IMR-90 (cell line): ENCODE measurements at regions of chr1 and their contacts with region 1.

Region 1: GRCh38 chr1:156456622-156457465 is 43.7 kb downstream of the MEF2D start:
- DNase-seq: peak; percentile 97
- ATAC-seq: peak; percentile 88
- H3K4me3 ChIP-seq: peak overlapping the region; percentile 43
- H3K27ac ChIP-seq: peak overlapping the region; percentile 87
- H3K4me1 ChIP-seq: peaks cover 4% of the 10 kb centered on the region; the same call in 1 of the 2 replicates
- H3K27me3 ChIP-seq: peaks cover 2% of the 10 kb centered on the region
- CTCF ChIP-seq: no peak
- POLR2A ChIP-seq: peak; percentile 63; the same call in 1 of the 2 replicates
- RAD21 ChIP-seq: no peak

Region 2: DNA sequence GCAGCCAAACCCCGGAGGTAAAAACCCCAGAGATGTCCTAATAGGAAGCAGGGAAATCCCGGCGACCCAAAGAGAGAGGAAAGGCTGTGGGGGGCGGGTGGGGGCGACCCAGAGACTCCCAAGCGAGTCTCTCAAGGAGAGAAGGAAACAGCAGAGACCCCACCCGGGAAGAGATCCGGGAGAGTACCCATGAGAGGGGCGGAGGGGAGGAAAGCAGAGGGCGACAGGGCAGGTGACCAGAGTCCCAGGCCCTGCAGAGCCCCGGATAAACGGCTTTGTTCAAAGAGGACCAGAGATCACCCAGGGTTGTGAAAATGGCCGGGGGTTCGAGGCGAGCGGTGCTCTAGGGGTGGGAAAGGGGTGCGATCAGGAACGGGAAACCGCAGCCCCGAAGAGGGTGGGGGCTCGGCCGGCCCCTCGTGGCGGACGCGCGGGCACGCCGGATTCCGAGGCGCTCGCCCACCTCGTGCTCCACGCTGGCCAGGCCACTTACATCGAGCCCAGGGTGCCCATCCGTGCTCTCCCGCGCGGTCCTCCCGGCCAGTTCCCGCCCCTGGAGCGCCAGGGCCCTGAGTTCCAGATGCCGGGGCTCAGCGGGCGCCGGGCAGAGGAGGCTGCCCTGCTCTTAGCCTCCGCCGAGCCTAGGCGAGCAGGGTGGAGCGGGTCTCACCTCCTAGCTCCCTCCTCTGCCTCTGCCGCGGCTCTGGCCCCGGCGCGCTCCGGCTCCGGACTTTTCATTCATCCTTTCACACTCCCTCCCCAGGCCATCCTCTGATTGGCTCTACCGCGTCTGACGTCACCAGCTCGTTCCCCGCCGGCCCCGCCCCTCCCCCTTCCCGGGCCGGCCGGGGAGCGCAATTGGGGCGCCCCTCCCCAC is 35.5 kb before region 1 on chr1:
- CTCF ChIA-PET with region 1: no interaction called
- POLR2A ChIA-PET with region 1: no interaction called
- dilution Hi-C with region 1: no loop called
- in situ Hi-C with region 1: no loop called
- intact Hi-C with region 1: no loop called
- DNase-seq: peak; percentile 45
- ATAC-seq: peak; percentile 88
- H3K4me3 ChIP-seq: no peak overlapping the region
- H3K27ac ChIP-seq: no peak overlapping the region
- H3K4me1 ChIP-seq: peaks cover 1% of the 10 kb centered on the region; the same call in 1 of the 2 replicates
- H3K27me3 ChIP-seq: peaks cover 92% of the 10 kb centered on the region
- CTCF ChIP-seq: no peak
- POLR2A ChIP-seq: no peak
- RAD21 ChIP-seq: no peak

Region 3: DNA sequence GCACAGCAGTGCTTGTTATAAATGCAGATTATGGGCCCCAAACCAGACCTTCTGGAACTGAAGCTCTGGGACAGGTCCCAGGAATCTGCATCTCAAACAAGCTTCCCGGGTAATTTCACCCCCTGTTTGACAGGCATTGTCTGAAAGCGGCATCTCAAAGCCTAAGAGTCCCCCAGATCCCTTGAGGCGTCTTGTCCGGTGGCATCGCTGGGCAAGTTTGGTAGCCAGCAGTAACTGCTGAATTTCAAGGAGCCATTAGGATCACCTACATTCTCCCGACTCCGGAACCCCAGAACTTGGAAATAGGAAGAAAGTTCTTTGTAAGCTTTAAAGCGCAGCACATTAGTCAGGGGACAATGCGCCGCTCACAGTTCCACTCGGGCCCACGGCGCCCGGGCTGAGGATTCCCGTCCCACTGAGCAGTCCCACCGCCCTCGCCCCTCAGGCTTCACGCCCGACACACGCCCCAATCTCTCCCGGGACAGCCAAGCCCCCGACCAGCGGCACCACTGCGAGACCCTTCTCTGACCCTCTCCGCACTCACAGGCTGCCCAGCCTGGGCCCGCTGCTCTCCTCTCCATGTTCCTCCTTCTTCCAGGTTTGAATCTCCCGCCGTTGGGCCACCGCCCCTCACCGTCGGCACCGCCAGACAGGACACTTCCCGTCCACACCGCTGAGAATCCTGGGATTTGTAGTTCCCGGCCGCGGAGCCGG is 115.3 kb after region 1 on chr1 and contains the start of gene IQGAP3:
- CTCF ChIA-PET with region 1: no interaction called
- POLR2A ChIA-PET with region 1: no interaction called
- dilution Hi-C with region 1: no loop called
- in situ Hi-C with region 1: no loop called
- intact Hi-C with region 1: loop called (anchors 1 kb)
- DNase-seq: peak; percentile 69
- ATAC-seq: peak; percentile 75
- H3K4me3 ChIP-seq: peak within 1 kb of the TSS; percentile 73
- H3K27ac ChIP-seq: peak within 1 kb of the TSS; percentile 66
- H3K4me1 ChIP-seq: peaks cover 7% of the 10 kb centered on the region
- H3K27me3 ChIP-seq: peaks cover 15% of the 10 kb centered on the region
- CTCF ChIP-seq: no peak
- POLR2A ChIP-seq: no peak; the same call in 1 of the 2 replicates
- RAD21 ChIP-seq: no peak
- total RNA-seq, gene IQGAP3: 13.6 TPM in 2 replicates

Region 4: DNA sequence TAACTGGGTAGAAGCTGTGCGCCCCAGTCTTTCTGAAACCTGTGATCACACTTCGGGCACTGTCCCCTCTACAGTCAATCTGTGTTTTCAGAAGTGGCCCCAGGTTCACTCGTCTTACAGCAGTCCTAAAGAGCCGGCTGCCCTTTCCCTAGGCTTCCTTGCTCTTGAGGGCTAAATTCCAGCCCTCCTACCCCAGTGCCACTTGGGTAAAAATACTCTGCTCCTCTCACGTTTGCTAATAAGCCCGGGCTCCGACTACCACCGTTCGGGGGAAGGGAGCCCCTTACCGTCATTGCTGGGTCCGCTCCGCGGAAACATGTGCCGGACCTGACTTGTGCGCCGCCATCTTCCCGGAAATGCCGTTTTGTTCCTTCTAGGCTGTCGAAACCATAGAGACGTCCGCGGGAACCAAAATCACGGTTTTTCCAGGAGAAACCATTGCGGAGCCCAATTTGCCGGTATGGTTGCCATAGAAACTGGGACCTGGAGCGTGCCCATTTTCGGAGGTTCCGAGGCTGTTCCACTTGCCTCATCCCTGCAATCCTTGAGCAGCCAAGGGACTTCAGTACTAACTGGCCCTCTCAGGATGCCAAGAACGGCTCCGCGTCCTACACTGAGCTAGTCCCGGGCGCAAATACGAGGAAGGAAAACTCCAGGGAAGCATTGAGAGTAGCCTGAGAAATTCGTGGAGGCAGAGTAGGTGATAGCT is 144.4 kb after region 1 on chr1 and contains the start of gene GPATCH4:
- CTCF ChIA-PET with region 1: no interaction called
- POLR2A ChIA-PET with region 1: no interaction called
- dilution Hi-C with region 1: no loop called
- in situ Hi-C with region 1: no loop called
- intact Hi-C with region 1: loop called (anchors 2 kb)
- DNase-seq: peak; percentile 92
- ATAC-seq: peak; percentile 95
- H3K4me3 ChIP-seq: peak within 1 kb of the TSS; percentile 78
- H3K27ac ChIP-seq: peak within 1 kb of the TSS; percentile 54
- H3K4me1 ChIP-seq: 0 out of 2 replicates have a peak, but pooled peaks cover 4% of the 10 kb centered on the region
- H3K27me3 ChIP-seq: no peaks in the 10 kb centered on the region
- CTCF ChIP-seq: no peak
- POLR2A ChIP-seq: peak; percentile 86
- RAD21 ChIP-seq: no peak
- total RNA-seq, gene GPATCH4: 30.8 and 41.8 TPM in 2 replicates